ENCODE measurements at regions of chr1 and their contacts with region 1.

Region 1: DNA sequence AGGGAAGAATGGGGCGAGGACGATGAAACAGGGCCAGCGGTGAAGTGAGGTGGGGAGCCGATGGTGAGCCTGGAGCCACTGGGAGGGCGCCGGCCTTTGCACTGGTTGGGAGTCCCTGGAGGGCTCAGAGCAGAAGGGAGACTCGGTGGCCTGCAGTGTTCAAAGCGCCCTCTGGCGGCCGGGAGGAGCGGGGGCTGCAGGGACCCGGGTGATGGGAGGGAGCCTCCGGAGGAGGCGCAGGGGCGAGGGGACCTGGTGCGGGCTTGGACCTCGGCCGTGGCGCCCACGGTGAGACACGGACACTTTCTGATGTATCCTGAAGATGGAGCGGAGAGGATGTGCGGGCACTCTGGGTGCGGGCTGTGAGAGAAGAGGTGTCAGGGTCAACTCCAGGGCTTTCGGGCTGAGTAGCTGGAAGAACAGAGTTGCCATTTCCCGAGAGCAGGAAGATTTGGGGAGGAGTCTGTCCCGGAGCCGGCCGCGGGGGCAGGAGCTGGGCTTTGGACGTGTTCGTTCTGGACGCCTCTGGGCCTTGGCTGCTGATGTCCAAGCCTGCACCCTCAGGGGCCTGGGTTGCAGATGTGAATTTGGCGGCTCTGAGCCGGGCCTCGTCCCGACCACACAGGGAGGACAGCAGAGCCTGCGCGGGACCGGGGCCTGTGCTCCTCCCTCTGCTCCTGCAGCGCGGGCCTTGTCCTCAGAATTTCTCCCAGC is 29.7 kb downstream of the HEYL start:
- DNase-seq: peak; percentile 63 to 68 (median 68)
- ATAC-seq: peak; percentile 79
- H3K4me3 ChIP-seq: no peak overlapping the region
- H3K4me1 ChIP-seq: no peaks in the 10 kb centered on the region
- CTCF ChIP-seq: peak; percentile 75

Region 2: DNA sequence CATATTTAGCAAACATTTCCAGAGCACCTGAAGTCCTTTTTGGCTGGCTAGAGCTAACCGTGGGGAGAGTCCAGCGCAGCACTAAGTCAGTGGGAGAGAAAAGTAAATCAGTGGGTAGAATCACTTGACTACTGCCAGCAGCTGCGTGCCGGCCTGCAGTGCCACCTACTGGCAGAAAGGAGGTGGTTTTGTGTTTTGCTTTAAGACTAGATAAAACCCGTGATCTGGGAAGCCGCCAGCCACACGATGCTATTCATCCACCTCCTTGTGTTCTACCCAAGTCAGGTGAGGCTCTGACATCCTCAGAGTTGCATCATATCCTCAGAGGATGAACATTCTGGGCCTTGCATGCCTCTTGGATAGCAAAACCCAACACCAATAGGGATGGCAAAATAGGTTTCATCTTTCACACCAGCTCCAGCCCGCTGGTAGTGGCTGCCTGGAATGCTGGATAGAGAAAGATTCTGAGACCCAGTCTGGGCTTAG is 43.8 kb after region 1 on chr1:
- intact Hi-C with region 1: loop called (anchors 5 to 10 kb)
- DNase-seq: peak in 2 of 3 donors; percentile 73 to 86
- ATAC-seq: peak; percentile 87
- H3K4me3 ChIP-seq: no peak overlapping the region
- H3K4me1 ChIP-seq: no peaks in the 10 kb centered on the region
- CTCF ChIP-seq: peak; percentile 72

Region 3: DNA sequence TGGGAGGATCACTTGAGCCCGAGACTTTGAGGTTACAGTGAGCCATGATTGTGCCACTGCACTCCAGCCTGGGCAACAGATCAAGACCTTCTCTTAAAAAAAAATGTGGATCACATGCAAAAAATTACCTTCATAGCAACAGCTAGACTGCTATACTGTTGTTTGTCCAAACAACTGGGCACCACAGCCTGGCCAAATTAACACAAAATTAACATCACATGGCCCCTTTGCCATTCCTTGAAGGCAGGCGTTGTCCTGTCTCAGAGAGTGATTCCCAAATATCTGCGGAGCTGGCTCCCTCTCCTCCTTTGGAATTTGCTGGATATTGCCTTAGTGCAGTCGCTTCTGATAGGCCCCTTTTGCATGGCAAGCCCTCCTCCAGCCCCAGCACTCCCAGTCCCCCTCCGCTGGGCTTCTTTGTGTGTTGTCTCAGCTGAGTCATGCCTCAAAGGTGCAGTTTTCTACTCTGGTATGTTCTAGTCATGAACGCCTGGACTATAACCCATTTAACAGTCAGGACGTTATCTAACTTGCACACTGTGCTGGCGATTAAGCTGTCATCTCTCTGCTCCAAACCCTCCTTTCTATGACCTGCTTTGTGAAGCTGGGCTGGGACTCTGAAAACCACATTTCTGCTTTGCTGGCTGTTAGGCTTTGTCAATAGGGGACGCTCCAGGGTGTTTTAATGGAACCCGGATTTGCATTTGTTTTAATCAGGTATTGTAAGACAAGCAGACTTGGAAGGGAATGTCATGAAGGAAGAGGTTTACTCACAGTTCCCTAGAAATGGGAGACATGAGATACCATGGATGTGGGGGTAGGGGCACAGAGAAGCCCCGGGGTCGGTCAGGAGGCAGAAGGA is 101.6 kb after region 1 on chr1:
- intact Hi-C with region 1: loop called in 1 of 2 experiments (anchors 10 kb)
- DNase-seq: no peak
- ATAC-seq: no peak
- H3K4me3 ChIP-seq: no peak overlapping the region
- H3K4me1 ChIP-seq: no peaks in the 10 kb centered on the region
- CTCF ChIP-seq: no peak

Region 4: DNA sequence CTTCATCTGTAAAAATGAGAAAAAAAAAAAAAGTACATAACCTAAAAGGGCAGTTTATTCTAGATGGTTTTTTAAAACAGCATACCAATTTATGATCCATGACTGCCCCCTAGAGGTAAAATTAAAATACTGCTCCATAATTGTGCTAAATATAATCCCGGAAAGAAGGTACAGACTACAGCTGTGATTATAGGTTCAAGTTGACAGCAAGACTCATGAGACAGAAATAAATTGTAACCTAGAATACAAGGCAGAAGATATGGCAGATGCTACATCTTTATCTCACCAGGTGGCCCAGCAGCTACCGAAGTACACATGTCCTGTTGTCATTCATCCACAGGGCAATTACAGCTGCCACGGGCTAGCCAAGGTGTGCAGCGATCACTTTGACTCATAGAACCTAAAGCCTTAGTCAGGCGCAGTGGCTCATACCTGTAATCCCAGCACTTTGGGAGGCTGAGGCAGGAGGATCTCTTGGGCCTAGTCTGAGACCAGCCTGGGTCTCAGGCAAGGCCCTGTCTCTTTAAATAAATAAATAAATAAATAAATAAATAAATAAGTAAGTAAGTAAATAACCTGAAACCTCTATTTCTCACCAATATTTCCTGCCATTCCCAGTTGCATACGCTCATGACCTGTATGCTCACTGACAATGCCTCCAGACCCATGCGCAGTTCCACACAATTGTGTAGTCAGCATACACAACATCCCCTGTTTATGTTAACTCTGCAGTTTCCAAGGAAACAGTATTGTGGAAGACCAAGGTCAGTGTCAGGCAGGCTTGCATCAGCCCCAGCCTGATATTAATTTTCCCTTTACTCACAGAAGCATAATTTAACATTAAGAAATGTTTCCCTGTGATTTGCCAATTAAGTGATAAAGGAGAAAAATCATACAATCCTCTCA is 110.6 kb after region 1 on chr1:
- intact Hi-C with region 1: loop called (anchors 10 kb)
- DNase-seq: peak in 1 of 3 donors; percentile 20
- ATAC-seq: peak; percentile 81
- H3K4me3 ChIP-seq: no peak overlapping the region
- H3K4me1 ChIP-seq: no peaks in the 10 kb centered on the region
- CTCF ChIP-seq: peak; percentile 33

Measured in mucosa of descending colon (tissue), 3 donors.